Heart right ventricle (tissue), 16 donors: ENCODE measurements at regions of chr5 and their contacts with region 1.

Region 1: GRCh38 chr5:149731639-149732323 is 1.7 kb downstream of the PPARGC1B start:
- DNase-seq: peak; percentile 86 to 90
- ATAC-seq: peak; percentile 3 to 79 (median 70)
- H3K4me3 ChIP-seq: peak overlapping the region; percentile 74 to 99 (median 94)
- H3K27ac ChIP-seq: peak overlapping the region; percentile 68 to 96 (median 91)
- H3K4me1 ChIP-seq: peaks cover 3 to 49% (median 33%) of the 10 kb centered on the region in 9 donors
- H3K27me3 ChIP-seq: no peaks in the 10 kb centered on the region
- CTCF ChIP-seq: peak in 4 of 9 donors; percentile 16 to 36 (median 26)

Region 2: DNA sequence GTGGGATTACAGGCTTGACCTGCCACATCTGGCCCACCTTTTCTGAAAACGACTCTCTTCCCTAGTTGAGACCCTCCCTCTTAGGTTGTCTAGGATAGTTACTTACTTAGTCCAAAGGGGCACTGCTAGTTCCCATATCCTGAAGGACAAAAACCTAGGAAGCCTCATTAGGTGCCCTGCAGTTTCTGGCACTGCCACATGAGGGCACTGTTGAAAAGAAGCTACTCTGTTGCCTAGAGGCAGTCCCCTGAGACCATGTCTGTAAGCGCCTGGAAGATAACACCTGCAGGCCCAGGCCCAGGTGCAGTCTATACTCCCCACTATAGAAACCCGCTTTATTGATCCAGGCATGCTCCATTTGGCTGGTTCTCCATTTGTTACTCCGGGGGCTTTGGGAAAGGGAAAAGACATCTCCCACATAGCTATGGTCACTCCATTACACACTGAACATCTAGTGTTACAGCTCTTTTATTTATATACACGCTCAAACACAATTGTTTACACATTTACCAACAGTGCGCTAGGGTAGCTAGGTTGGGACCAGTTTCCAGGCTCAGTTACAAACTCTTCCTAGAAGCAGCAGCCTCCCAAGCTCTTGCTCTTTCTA is 75.1 kb before region 1 on chr5:
- intact Hi-C with region 1: loop called in 4 of 10 experiments (anchors 5 to 10 kb)
- DNase-seq: peak; percentile 54 to 56
- ATAC-seq: peak in 5 of 8 donors; percentile 26 to 63 (median 53)
- H3K4me3 ChIP-seq: no peak overlapping the region
- H3K27ac ChIP-seq: peak overlapping the region in 8 of 10 donors; percentile 12 to 91 (median 76)
- H3K4me1 ChIP-seq: peaks cover 0 to 29% (median 12%) of the 10 kb centered on the region in 9 donors
- H3K27me3 ChIP-seq: no peaks in the 10 kb centered on the region
- CTCF ChIP-seq: peak; percentile 37 to 82 (median 70)

Region 3: GRCh38 chr5:149679876-149680809 is 51.6 kb before region 1 on chr5:
- intact Hi-C with region 1: loop called in 5 of 10 experiments (anchors 5 kb)
- DNase-seq: peak; percentile 30 to 46
- ATAC-seq: peak; percentile 7 to 60 (median 44)
- H3K4me3 ChIP-seq: no peak overlapping the region
- H3K27ac ChIP-seq: peak overlapping the region; percentile 71 to 94 (median 88)
- H3K4me1 ChIP-seq: peaks cover 0 to 89% (median 29%) of the 10 kb centered on the region in 9 donors
- H3K27me3 ChIP-seq: no peaks in the 10 kb centered on the region
- CTCF ChIP-seq: no peak

Region 4: DNA sequence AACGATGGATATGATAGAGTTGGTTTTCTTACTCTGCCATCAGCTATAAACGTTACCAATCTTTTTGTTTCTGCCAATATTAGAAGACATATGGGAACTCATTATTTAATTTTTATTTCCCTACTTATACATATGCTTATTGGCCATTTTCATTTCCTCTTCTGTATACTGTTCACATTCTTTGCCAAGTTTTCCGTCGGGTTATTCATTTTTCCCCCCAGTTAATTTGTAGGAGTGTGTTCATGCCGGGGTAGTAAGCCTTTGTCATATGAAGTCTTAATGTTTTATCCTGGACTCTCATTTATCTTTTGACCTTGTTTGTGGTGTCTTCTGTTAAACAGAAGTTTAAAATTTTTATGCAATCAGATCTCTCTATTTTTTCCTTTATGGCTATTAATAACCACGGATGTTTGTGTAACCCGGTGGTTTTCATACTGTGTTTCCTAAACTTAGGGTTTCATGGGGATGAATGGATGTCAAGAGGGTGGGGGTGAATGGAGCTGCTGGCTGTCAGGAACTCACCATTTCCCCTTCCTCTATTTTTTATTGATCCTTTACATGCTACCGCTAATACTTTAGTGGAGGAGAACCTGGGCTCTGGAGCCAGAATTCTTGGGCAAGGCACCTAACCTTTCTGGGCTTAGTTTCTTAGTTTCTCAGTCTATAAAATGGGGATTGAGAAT is 44.2 kb before region 1 on chr5:
- intact Hi-C with region 1: loop called in 1 of 10 experiments (anchors 5 kb)
- DNase-seq: no peak
- ATAC-seq: peak in 1 of 8 donors; percentile 9
- H3K4me3 ChIP-seq: no peak overlapping the region
- H3K27ac ChIP-seq: peak overlapping the region in 7 of 10 donors; percentile 8 to 65 (median 28)
- H3K4me1 ChIP-seq: peaks cover 0 to 43% (median 13%) of the 10 kb centered on the region in 9 donors
- H3K27me3 ChIP-seq: no peaks in the 10 kb centered on the region
- CTCF ChIP-seq: no peak

Region 5: DNA sequence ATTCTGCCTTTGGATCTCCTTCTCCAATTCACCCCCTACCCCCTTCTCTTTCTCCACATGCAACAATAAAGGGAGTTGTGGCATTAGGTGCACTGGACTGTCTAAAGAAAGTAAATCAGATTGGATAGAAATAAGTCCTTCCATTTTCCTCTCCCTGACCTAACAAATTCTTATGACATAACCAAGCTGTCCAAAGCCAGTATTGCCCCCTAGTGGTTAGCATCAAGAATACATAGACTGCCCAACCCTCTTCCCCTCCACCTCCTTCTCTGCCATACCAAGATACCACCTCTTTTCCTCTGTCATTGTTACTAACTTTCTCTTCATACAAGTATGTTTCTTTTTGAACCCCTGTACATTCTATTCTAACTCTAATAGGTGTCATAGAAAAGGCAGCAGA is 44.0 kb after region 1 on chr5:
- intact Hi-C with region 1: loop called in 4 of 10 experiments (anchors 5 kb)
- DNase-seq: no peak
- ATAC-seq: peak in 1 of 8 donors; percentile 19
- H3K4me3 ChIP-seq: no peak overlapping the region
- H3K27ac ChIP-seq: peak overlapping the region in 8 of 10 donors; percentile 30 to 79 (median 66)
- H3K4me1 ChIP-seq: peaks cover 29 to 97% (median 88%) of the 10 kb centered on the region in 9 donors
- H3K27me3 ChIP-seq: no peaks in the 10 kb centered on the region
- CTCF ChIP-seq: peak in 8 of 9 donors; percentile 14 to 64 (median 43)

Region 6: GRCh38 chr5:149804478-149805450 is 73.0 kb after region 1 on chr5:
- intact Hi-C with region 1: loop called in 2 of 10 experiments (anchors 5 kb)
- DNase-seq: no peak
- ATAC-seq: peak in 2 of 8 donors; percentile 6 to 7
- H3K4me3 ChIP-seq: no peak overlapping the region
- H3K27ac ChIP-seq: peak overlapping the region; percentile 76 to 92 (median 88)
- H3K4me1 ChIP-seq: peaks cover 44 to 96% (median 88%) of the 10 kb centered on the region in 9 donors
- H3K27me3 ChIP-seq: no peaks in the 10 kb centered on the region
- CTCF ChIP-seq: no peak